ENCODE measurements at regions of chr14 and their contacts with region 1.

Region 1: DNA sequence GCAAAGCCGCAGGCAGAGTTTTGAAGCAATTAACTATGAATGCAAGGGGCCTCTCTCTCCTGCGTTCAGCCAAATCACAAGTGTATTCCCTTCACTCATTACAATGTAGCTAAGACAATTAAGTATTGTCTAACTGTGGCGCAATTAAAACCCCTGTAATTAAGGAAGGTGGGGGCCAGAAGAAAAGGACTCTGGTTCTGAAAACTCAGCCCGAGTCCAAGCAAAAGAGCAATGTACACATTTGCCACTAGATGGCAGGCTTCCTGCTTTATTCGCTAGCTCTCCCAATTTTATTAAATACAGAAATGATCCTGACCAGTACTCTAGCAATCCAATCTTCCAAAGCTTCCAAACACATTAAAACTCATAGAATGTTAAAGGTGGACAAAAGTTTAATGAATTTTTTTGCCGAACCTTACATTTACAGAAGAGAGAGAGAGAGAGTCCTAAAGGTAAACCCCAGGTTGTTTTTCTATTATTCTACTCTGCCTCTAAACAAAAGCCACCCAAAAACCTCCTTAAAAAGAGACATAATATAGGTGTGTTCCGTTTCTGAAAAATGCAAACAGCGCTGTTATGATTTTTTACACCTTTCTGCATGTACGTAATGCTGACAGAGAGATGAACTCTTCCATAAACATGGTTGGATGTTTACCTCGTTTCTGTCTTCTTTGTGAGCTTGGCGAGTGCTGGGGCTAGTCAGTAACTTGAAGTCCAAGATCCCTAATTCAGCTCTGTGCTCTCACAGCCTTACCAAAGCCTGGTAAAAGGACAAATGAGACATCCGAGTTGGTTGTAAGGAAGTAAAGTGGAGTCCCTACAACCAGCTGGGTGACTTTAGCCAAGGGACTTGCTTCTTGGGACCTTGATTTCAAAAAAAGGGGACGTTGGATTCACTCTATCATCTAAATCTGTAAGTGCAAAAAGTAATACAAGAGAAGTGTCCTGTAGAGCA is 50.9 kb upstream of the VASH1 start:
- DNase-seq: peak; percentile 22 to 59 (median 44)
- ATAC-seq: peak; percentile 76
- H3K4me3 ChIP-seq: no peak overlapping the region
- H3K27ac ChIP-seq: no peak overlapping the region
- H3K4me1 ChIP-seq: peaks cover 0 to 4% of the 10 kb centered on the region in 2 experiments; a peak in 3 of 5 replicates
- H3K27me3 ChIP-seq: peaks cover 2 to 20% of the 10 kb centered on the region in 2 experiments; a peak in 4 of 5 replicates
- CTCF ChIP-seq: peak; percentile 63 to 76 (median 64)
- EP300 ChIP-seq: no peak
- POLR2A ChIP-seq: no peak
- RAD21 ChIP-seq: peak; percentile 73 to 83

Region 2: DNA sequence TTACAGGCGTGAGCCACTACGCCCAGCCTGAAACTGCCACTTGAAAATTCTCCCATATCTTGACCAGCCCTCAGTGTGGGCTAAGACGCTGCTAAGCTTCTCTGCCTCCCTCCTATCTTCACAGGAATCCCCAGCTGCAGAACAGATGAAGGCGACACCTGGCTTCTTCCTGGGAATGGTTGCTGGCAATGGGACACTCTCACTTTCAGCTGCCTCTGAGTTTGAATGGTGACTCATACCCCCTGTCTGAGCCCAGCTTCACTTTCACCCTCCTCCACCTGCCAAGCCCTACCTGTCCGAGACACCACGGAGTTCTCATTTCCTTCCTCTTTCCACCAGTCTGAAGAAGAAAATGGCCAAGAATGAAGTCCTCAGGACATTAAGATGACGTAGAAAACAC is 32.6 kb after region 1 on chr14:
- CTCF ChIA-PET with region 1: no interaction called
- POLR2A ChIA-PET with region 1: no interaction called
- in situ Hi-C with region 1: no loop called
- intact Hi-C with region 1: no loop called
- DNase-seq: no peak
- ATAC-seq: no peak
- H3K4me3 ChIP-seq: no peak overlapping the region
- H3K27ac ChIP-seq: no peak overlapping the region
- H3K4me1 ChIP-seq: no peaks in the 10 kb centered on the region
- H3K27me3 ChIP-seq: no peaks in the 10 kb centered on the region
- CTCF ChIP-seq: no peak
- EP300 ChIP-seq: no peak
- POLR2A ChIP-seq: no peak
- RAD21 ChIP-seq: no peak

Region 3: GRCh38 chr14:76784266-76785264 is 74.2 kb after region 1 on chr14:
- CTCF ChIA-PET with region 1: interaction called, 21 read pairs
- POLR2A ChIA-PET with region 1: interaction called, 3 read pairs
- in situ Hi-C with region 1: loop called (anchors 5 kb)
- intact Hi-C with region 1: loop called (anchors 1 kb)
- DNase-seq: peak; percentile 86 to 95 (median 92)
- ATAC-seq: peak; percentile 100
- H3K4me3 ChIP-seq: no peak overlapping the region
- H3K27ac ChIP-seq: no peak overlapping the region
- H3K4me1 ChIP-seq: peaks cover 3 to 11% of the 10 kb centered on the region in 2 experiments; a peak in 4 of 5 replicates
- H3K27me3 ChIP-seq: no peaks in the 10 kb centered on the region
- CTCF ChIP-seq: peak; percentile 93 to 97 (median 97)
- EP300 ChIP-seq: no peak
- POLR2A ChIP-seq: no peak
- RAD21 ChIP-seq: peak; percentile 88 to 93

Region 4: DNA sequence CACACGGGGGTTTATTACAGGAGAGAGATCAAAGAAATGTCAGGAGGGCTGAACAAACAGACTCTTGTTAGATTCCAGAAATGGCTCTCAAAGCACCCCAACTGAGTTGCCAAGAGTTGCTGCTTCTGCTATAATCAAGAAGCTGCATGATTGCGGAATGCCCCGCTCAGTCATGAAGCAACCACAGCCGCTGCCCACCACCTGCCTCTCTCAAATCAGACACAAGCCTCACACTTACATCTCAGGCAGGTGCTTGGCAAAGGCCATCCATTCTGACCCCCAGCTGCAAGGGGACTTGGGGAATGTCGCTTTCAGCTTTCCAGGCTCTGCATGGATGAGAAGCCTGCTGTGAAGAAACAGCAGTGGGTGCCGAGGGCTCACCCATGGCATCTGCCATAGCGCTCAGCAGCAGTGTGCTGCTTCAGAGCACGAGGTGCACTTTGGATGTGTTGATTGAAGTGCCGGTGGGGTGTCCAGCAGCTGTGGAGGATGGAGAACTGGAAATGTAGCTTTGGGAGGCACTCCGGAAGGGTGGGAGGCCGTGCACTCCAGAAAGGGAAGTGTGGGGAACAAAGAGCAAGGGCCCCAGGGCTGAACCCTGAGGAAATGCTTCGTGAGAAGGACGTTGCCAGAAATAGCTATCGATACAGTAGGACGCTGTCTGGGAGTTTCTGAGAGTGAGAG is 153.5 kb after region 1 on chr14:
- CTCF ChIA-PET with region 1: no interaction called
- POLR2A ChIA-PET with region 1: no interaction called
- in situ Hi-C with region 1: loop called (anchors 10 kb)
- intact Hi-C with region 1: no loop called
- DNase-seq: no peak
- ATAC-seq: no peak
- H3K4me3 ChIP-seq: no peak overlapping the region
- H3K27ac ChIP-seq: no peak overlapping the region
- H3K4me1 ChIP-seq: peaks cover 0 to 8% of the 10 kb centered on the region in 2 experiments; a peak in 2 of 5 replicates
- H3K27me3 ChIP-seq: peaks cover 17 to 67% of the 10 kb centered on the region in 2 experiments; a peak in 4 of 5 replicates
- CTCF ChIP-seq: no peak
- EP300 ChIP-seq: no peak
- POLR2A ChIP-seq: no peak
- RAD21 ChIP-seq: no peak